ENCODE measurements at regions of chr2 and their contacts with region 1.

Region 1: DNA sequence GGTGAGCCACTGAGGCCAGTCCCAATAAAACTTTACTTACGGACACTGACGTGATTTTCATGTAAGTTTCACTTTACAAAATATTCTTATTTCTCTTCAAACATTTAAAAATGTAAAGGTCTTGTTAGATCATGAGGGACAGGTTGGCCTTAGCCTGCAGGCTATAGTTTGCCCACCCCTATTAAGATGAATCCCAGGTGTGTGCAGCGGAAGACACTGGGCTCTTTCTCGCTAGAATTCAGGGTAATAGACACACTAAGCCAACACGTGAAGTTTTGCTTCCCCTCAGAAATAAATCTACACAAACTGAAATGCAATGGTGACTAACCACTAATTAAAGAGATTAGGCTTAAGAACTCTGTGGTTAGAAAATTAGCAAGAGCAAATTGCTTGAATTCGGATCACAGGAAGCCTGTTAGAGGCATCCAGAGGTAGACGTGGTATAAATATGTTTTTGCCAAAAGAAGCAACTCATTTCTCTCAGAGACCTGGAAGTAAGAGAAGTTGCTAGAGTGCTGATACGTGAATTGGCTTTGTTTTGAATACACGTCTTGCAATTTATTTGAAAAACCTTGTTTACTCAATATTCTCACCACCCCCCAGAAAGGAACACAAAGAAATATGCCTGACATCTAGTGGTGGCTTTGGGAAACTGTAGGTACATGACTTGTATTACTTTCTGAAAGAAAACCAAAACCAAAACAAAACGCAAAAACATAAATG is 151.6 kb downstream of the DTNB start:
- DNase-seq: peak; percentile 80
- ATAC-seq: peak; percentile 85
- H3K4me3 ChIP-seq: peak overlapping the region; percentile 52
- H3K27ac ChIP-seq: no peak overlapping the region
- H3K4me1 ChIP-seq: peaks cover 11% of the 10 kb centered on the region; the same call in 1 of the 2 replicates
- H3K27me3 ChIP-seq: no peaks in the 10 kb centered on the region
- CTCF ChIP-seq: peak; percentile 93

Region 2: DNA sequence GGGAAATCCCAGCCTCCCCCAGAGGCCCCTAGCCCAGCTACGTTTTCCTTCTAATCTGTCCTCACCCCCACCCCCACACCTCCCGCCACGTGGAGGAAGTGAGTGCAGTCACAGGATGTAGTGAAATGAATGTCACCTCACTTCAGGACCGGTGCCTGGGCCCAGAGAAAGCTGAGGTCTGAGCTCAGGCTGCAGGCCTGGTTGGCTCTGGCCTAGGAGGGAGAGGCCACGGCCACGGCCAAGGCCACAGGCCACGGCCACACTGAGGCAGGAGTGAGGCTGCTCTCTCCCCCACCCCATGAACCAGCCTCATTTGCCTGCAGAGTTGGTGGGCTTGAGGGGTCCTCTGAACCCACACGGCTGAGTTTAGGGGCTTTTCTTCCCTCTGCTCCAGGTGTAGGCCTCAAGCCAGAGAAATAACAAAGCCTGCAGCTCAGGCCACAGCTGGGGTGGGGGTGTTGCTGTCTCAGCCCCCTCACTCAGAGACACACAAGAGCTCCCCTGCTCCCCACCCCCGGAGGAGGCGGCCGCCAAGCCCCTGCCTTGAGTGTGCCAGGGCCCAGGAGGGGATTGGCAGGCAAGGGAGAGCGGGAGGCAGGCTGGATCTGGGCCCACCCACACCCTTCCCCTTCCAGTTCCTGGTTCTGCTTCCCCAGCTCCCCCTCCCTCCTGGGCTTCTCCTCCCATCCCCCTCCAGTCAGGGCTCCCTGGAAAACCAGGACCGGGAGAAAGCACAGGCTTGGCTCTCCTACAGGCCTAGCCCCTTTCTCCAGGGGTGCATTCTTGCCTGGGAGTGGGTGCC is 207.1 kb before region 1 on chr2:
- CTCF ChIA-PET with region 1: no interaction called
- POLR2A ChIA-PET with region 1: no interaction called
- intact Hi-C with region 1: no loop called
- DNase-seq: no peak
- ATAC-seq: no peak
- H3K4me3 ChIP-seq: no peak overlapping the region
- H3K27ac ChIP-seq: no peak overlapping the region
- H3K4me1 ChIP-seq: peaks cover 20% of the 10 kb centered on the region
- H3K27me3 ChIP-seq: no peaks in the 10 kb centered on the region
- CTCF ChIP-seq: no peak

Region 3: DNA sequence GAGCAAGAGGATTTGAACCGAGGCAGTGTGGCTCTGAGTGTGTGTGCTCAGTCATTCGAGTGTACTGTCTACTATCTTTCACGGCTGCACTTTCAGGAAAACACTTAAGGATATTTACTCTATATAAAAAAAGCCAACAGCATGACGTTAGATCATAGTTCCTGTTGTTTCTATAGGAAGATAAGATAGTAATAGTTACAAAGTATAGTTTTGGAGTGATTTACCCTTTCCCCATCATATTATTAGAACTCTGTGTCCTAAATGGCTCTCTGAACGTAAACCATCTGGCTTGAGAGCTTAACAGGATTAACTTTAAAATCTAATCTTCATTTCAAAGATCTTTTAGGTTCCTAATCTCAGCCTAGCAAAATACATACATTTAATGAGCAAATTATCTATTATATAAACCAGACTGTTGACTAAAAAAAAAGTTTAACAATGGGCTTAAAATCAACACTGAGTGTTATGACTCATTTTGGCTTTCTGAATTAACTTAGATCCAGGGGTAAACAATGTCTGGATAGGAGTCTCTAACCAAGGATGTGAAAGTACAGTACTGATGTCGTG is 29.8 kb before region 1 on chr2:
- CTCF ChIA-PET with region 1: no interaction called
- POLR2A ChIA-PET with region 1: no interaction called
- intact Hi-C with region 1: loop called (anchors 1 kb)
- DNase-seq: peak; percentile 82
- ATAC-seq: peak; percentile 72
- H3K4me3 ChIP-seq: peak overlapping the region; percentile 51; the same call in 1 of the 2 replicates
- H3K27ac ChIP-seq: peak overlapping the region; percentile 77
- H3K4me1 ChIP-seq: peaks cover 28% of the 10 kb centered on the region
- H3K27me3 ChIP-seq: no peaks in the 10 kb centered on the region
- CTCF ChIP-seq: no peak

Region 4: GRCh38 chr2:25567406-25567805 is 45.6 kb after region 1 on chr2:
- CTCF ChIA-PET with region 1: no interaction called
- POLR2A ChIA-PET with region 1: no interaction called
- intact Hi-C with region 1: loop called (anchors 5 kb)
- DNase-seq: peak; percentile 67
- ATAC-seq: peak; percentile 85
- H3K4me3 ChIP-seq: no peak overlapping the region
- H3K27ac ChIP-seq: no peak overlapping the region
- H3K4me1 ChIP-seq: no peaks in the 10 kb centered on the region
- H3K27me3 ChIP-seq: no peaks in the 10 kb centered on the region
- CTCF ChIP-seq: peak; percentile 78